Pancreas (tissue), 10 donors: ENCODE measurements at regions of chr11 and their contacts with region 1.

Region 1: DNA sequence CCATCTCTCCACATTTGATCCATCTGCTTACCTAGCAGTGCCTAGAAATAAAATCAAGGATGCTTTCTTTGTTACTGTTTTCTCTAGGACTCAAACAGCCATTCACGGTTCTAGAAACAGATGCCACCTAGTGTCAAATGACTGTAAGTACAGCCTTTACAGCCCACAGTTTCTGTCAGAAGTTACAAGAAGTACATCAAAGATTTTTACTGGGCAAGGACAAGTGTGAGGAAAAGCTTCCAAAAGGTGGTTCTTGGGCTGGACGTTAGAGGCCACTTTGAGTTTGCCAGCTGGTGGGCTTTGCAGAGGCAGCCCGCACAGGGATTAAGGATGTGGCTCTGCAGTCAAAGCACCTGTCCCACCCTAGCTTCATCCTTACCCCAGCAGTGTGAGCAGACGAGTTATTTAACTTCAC is 6.9 kb downstream of the KMT5B start:
- DNase-seq: peak in 1 of 6 donors; percentile 15
- ATAC-seq: peak; percentile 38 to 69 (median 64)
- H3K4me3 ChIP-seq: no peak overlapping the region
- H3K27ac ChIP-seq: no peak overlapping the region
- H3K4me1 ChIP-seq: peaks cover 11 to 34% (median 23%) of the 10 kb centered on the region in 3 donors
- H3K27me3 ChIP-seq: no peaks in the 10 kb centered on the region
- CTCF ChIP-seq: peak; percentile 55 to 78 (median 73)

Region 2: DNA sequence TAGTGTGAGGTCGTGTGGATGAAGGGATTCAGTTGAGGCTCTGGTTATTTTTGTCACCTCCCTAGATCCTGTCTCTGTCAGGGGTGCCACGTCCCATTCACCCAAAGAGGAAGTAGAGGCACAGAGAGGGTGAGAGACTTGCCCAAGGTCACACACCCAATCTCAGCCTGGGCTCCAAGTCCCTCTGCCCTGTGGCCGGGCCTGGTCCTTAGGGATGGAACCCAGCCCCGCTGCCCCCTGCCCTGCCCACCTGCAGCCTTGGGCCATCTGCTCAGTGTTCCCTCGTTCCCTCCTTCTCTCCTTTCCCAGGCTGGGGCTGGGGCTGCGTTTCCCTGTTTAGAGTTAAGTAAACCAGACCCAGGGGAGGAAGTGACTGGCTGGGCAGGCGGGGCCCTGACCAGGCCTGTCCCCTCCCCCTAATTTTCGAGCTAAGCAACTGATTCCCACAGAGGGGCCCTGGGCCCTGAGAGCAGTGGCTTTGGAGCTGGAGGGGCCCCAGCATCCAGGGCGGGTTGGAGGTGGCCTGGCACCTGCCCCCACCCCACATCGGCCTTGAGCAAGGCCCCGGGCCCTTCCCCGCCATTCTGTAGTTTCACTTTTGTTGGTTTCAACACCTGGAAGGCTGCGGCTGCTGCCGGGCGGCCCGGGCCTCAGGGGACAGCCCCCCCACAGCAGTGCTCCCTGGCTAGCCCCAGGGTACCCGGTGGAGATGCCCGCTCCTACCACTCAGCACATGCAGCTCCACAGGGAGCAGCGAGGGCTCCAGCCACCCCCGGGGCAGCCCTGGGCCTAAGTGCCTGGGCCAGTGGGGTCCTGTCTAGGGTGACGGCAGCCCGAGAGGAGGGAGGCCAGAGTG is 165.9 kb before region 1 on chr11:
- intact Hi-C with region 1: loop called in 1 of 3 experiments (anchors 10 kb)
- DNase-seq: peak; percentile 66 to 87 (median 75)
- ATAC-seq: peak; percentile 16 to 41 (median 32)
- H3K4me3 ChIP-seq: peak overlapping the region; percentile 39 to 72 (median 64)
- H3K27ac ChIP-seq: peak overlapping the region; percentile 89 to 95 (median 92)
- H3K4me1 ChIP-seq: peaks cover 21 to 45% (median 37%) of the 10 kb centered on the region in 3 donors
- H3K27me3 ChIP-seq: no peaks in the 10 kb centered on the region
- CTCF ChIP-seq: no peak

Region 3: DNA sequence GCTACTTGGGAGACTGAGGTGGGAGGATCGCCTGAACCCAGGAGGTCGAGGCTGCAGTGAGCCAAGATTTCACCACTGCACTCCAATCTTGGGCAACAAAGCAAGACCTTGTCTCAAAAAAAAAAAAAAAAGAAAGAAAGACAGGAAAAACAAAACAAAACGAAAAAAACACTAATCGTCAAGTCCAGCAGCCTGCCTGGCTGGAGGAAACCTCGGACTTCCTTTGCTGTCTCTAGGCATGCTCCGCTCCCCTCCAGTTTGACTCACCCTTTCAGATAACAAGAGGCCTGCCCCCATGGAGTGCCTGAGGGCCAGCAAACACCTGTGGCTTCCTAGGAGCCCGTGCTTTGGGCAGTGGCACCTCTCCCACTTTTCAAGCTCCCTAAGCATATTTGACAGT is 56.2 kb before region 1 on chr11:
- intact Hi-C with region 1: loop called in 1 of 3 experiments (anchors 10 kb)
- DNase-seq: peak; percentile 72 to 85 (median 82)
- ATAC-seq: peak; percentile 36 to 54 (median 46)
- H3K4me3 ChIP-seq: no peak overlapping the region
- H3K27ac ChIP-seq: peak overlapping the region; percentile 4 to 52 (median 37)
- H3K4me1 ChIP-seq: peaks cover 23 to 44% (median 32%) of the 10 kb centered on the region in 3 donors
- H3K27me3 ChIP-seq: no peaks in the 10 kb centered on the region
- CTCF ChIP-seq: no peak